Naive thymus-derived CD4-positive, alpha-beta T cell (primary cell): ENCODE measurements at regions of chr10 and their contacts with region 1.

Region 1: DNA sequence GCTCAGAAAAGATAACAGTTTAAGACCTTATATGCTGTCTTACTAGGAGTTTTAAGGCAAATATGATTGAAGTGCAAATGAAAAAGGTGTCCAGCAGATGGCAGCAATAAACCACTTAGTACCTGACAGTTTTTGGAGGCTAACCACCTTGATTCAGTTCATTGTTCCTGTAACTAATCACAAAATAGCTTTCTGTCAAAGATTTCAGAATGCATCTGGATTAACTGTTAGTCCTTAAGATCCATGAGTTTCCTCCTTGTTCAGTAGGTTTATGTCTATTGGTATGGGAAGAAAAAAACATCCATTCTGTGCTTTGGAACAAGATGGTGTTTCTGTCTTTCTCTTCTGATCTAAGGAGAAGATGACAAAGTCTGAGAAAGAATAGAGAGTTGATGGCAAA is 46.6 kb downstream of the CCSER2 start:
- DNase-seq: peak in 7 of 9 donors; percentile 34 to 68 (median 57)
- ATAC-seq: peak; percentile 70
- H3K4me3 ChIP-seq: no peak overlapping the region
- H3K4me3 Mint-ChIP-seq: peak overlapping the region in 1 of 10 donors; percentile 4
- H3K27ac ChIP-seq: no peak overlapping the region
- H3K27ac Mint-ChIP-seq: peak overlapping the region in 5 of 9 donors; percentile 18 to 79 (median 41)
- H3K4me1 ChIP-seq: peaks cover 0 to 5% of the 10 kb centered on the region in 2 donors
- H3K4me1 Mint-ChIP-seq: peaks cover 19 to 55% (median 37%) of the 10 kb centered on the region in 7 donors
- H3K27me3 ChIP-seq: no peaks in the 10 kb centered on the region
- H3K27me3 Mint-ChIP-seq: no peaks in the 10 kb centered on the region

Region 2: GRCh38 chr10:84264611-84265141 is 110.3 kb before region 1 on chr10:
- CTCF ChIA-PET with region 1: interaction called, 5 read pairs
- POLR2A ChIA-PET with region 1: no interaction called
- intact Hi-C with region 1: loop called (anchors 1 kb)
- DNase-seq: peak; percentile 37 to 74 (median 61)
- ATAC-seq: peak; percentile 94
- H3K4me3 ChIP-seq: no peak overlapping the region
- H3K4me3 Mint-ChIP-seq: no peak overlapping the region
- H3K27ac ChIP-seq: no peak overlapping the region
- H3K27ac Mint-ChIP-seq: no peak overlapping the region
- H3K4me1 ChIP-seq: peaks cover 0 to 3% of the 10 kb centered on the region in 2 donors
- H3K4me1 Mint-ChIP-seq: peaks cover 0 to 16% (median 7%) of the 10 kb centered on the region in 7 donors
- H3K27me3 ChIP-seq: no peaks in the 10 kb centered on the region
- H3K27me3 Mint-ChIP-seq: peaks cover 12 to 36% (median 25%) of the 10 kb centered on the region in 5 donors

Region 3: DNA sequence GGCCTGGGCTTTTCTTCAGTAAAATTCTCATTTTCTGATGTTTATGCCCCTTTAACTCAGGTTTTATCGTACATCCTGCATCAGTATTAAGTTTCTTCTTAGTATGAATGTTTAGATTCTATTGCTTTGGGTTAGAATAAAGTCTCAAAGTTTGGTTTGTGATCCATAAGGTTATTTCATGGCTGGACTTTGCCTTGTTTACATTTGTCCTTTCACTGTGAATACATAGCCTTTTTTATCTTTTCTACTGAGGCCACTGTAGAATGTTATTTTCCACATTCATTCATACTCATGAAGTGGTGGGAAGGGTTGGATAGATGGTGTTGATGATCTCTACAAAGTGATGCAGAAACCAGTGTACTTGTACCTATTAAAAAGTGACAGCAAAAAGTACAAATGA is 13.1 kb after region 1 on chr10:
- CTCF ChIA-PET with region 1: no interaction called
- POLR2A ChIA-PET with region 1: no interaction called
- intact Hi-C with region 1: loop called in 1 of 2 experiments (anchors 2 kb)
- DNase-seq: no peak
- ATAC-seq: no peak
- H3K4me3 ChIP-seq: no peak overlapping the region
- H3K4me3 Mint-ChIP-seq: no peak overlapping the region
- H3K27ac ChIP-seq: no peak overlapping the region
- H3K27ac Mint-ChIP-seq: peak overlapping the region in 2 of 9 donors; percentile 18 to 47
- H3K4me1 ChIP-seq: no peaks in the 10 kb centered on the region
- H3K4me1 Mint-ChIP-seq: peaks cover 4 to 68% (median 34%) of the 10 kb centered on the region in 7 donors
- H3K27me3 ChIP-seq: no peaks in the 10 kb centered on the region
- H3K27me3 Mint-ChIP-seq: no peaks in the 10 kb centered on the region